ENCODE measurements at regions of chr7 and their contacts with region 1.

Region 1: GRCh38 chr7:138238734-138239659 is 162.7 kb downstream of the AKR1D1 start:
- DNase-seq: no peak
- ATAC-seq: no peak
- H3K4me3 ChIP-seq: no peak overlapping the region
- H3K27ac ChIP-seq: no peak overlapping the region
- H3K4me1 ChIP-seq: peaks cover 42% of the 10 kb centered on the region
- H3K27me3 ChIP-seq: no peaks in the 10 kb centered on the region
- CTCF ChIP-seq: no peak
- EP300 ChIP-seq: no peak
- POLR2A ChIP-seq: no peak
- RAD21 ChIP-seq: no peak

Region 2: DNA sequence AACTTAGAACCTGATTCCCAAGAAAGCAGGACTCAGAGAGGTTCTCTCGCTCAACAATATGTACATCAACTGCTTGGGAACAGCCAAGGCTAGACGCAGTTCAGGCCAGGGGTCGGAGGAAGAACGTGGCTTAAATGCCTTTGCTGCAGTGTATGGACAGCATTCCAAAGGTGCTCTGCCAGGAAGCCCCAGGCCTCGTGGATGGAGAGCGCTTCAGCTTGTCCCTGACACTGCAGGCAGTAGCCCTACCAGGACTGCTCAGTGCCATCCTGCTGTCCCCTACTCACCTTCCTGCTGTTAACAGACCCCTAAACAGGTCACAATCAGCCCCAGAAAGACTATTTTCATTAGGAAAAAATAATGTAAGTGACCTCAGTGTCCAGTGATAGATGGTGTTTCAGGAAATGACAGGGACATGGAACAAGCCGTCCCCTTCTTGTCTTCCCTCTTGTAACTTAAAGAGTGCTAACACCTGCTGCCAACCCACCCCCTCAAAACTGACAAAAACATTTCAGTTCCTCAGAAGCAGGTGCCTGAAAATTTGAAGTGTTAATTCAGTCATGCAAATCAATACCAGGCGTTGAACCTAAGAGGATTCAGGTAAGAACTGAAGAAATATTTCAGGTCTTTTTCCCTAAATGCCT is 253.6 kb before region 1 on chr7:
- CTCF ChIA-PET with region 1: no interaction called
- POLR2A ChIA-PET with region 1: no interaction called
- in situ Hi-C with region 1: no loop called
- intact Hi-C with region 1: no loop called
- DNase-seq: peak; percentile 32
- ATAC-seq: peak; percentile 75
- H3K4me3 ChIP-seq: no peak overlapping the region; a peak in 1 of 6 replicates
- H3K27ac ChIP-seq: peak overlapping the region; percentile 59
- H3K4me1 ChIP-seq: peaks cover 100% of the 10 kb centered on the region
- H3K27me3 ChIP-seq: no peaks in the 10 kb centered on the region
- CTCF ChIP-seq: no peak
- EP300 ChIP-seq: no peak
- POLR2A ChIP-seq: no peak
- RAD21 ChIP-seq: no peak

Region 3: GRCh38 chr7:138161600-138162081 is 77.4 kb before region 1 on chr7:
- CTCF ChIA-PET with region 1: no interaction called
- POLR2A ChIA-PET with region 1: no interaction called
- in situ Hi-C with region 1: no loop called
- intact Hi-C with region 1: loop called (anchors 10 kb)
- DNase-seq: peak; percentile 95
- ATAC-seq: peak; percentile 88
- H3K4me3 ChIP-seq: no peak overlapping the region; a peak in 1 of 6 replicates
- H3K27ac ChIP-seq: peak overlapping the region; percentile 21
- H3K4me1 ChIP-seq: peaks cover 59% of the 10 kb centered on the region
- H3K27me3 ChIP-seq: no peaks in the 10 kb centered on the region
- CTCF ChIP-seq: peak; percentile 94
- EP300 ChIP-seq: peak in 1 of 2 experiments; percentile 55; a peak in 2 of 4 replicates
- POLR2A ChIP-seq: no peak
- RAD21 ChIP-seq: peak; percentile 92

Measured in HepG2 (cell line).